ENCODE measurements at regions of chr3 and their contacts with region 1.

Region 1: GRCh38 chr3:26596335-26596734 is 26.2 kb upstream of the LRRC3B start:
- DNase-seq: no peak
- H3K4me3 ChIP-seq: no peak overlapping the region
- H3K27ac ChIP-seq: no peak overlapping the region
- H3K4me1 ChIP-seq: no peaks in the 10 kb centered on the region
- H3K27me3 ChIP-seq: no peaks in the 10 kb centered on the region
- CTCF ChIP-seq: no peak
- EP300 ChIP-seq: no peak
- POLR2A ChIP-seq: no peak

Region 2: DNA sequence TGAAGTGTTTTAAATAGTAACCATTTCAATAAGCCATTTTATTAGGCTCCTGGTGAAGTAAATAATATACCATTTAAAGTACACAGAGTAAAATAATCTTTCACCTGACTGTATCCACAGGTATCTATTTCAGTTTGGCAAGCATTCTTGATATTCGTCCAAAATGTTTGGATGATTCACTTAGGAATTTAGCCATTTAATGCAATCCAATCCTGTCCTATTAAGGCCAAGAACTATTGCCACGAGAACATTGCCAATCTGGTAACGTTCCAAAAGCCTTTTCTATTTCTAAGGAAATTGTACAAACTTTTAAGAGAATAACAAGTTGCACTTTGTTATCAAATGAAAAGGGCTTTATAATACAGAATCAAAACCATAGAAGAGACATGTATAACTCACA is 1891.8 kb before region 1 on chr3:
- intact Hi-C with region 1: loop called in 1 of 4 experiments (anchors 5 kb)
- DNase-seq: no peak
- H3K4me3 ChIP-seq: no peak overlapping the region
- H3K27ac ChIP-seq: no peak overlapping the region
- H3K4me1 ChIP-seq: no peaks in the 10 kb centered on the region
- H3K27me3 ChIP-seq: no peaks in the 10 kb centered on the region
- CTCF ChIP-seq: no peak
- EP300 ChIP-seq: no peak
- POLR2A ChIP-seq: no peak

Region 3: DNA sequence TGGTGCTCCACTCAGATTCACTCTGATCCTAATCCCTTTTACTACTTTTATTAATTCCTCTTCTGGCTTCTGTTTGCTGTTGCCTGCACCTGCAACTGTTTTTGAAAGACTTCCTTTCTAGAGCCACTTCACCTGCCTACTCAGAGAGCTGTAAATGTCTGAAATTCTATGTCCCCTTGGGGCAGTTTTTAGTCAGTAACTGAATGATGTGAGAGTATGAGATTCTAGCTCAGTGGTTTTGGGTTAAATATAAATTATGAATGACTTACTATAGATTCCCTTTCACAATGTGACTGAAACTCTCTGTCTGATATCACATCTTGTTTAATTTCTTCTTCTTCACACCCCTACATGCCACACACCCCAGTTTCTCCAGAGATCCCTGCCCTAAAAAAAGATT is 21.6 kb before region 1 on chr3:
- intact Hi-C with region 1: no loop called
- DNase-seq: no peak
- H3K4me3 ChIP-seq: no peak overlapping the region
- H3K27ac ChIP-seq: no peak overlapping the region
- H3K4me1 ChIP-seq: no peaks in the 10 kb centered on the region
- H3K27me3 ChIP-seq: no peaks in the 10 kb centered on the region
- CTCF ChIP-seq: no peak
- EP300 ChIP-seq: no peak
- POLR2A ChIP-seq: no peak

Region 4: DNA sequence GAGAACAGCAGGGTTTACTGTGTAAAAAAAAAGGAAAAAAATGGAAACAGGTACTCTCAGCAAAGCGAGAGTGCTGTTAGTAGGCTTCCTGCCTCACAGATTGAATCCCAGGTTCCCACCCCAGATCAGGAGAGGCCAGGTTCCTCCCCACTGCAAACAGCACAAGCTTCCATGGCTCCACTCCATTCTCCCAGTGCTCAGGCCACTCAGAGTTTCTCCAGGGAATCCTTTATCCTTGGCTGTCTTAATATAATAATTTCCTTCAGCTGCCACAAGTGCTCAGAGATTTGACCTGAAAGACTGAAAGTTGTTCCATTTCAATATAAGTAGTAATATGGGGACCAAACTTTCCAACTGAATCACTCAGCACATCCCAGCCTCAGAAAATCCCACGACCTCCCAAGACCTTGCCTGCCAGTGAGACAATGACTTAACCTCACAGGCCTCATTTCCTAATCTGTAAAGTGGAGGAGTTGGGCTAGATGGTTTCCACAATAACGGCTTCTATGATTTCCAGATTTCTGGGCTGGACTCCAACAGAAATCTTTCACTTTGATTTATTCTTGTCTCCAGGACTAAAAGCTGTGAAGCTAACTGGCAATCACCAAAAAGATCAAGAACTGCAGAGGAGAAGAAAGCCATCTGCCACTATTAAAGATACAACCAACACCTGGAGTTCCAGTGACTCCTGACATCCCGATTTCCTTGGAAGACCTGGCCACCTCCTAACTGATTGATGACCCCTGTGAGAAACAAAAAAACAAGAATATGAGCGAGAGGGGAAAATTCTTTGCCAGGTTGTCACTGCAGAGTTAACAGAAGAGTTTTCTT is 483.3 kb after region 1 on chr3:
- intact Hi-C with region 1: no loop called
- DNase-seq: no peak
- H3K4me3 ChIP-seq: no peak overlapping the region
- H3K27ac ChIP-seq: no peak overlapping the region
- H3K4me1 ChIP-seq: no peaks in the 10 kb centered on the region
- H3K27me3 ChIP-seq: no peaks in the 10 kb centered on the region
- CTCF ChIP-seq: no peak
- EP300 ChIP-seq: no peak
- POLR2A ChIP-seq: no peak